CD8-positive, alpha-beta T cell (primary cell): ENCODE measurements at regions of chr13 and their contacts with region 1.

Region 1: GRCh38 chr13:50911937-50912795 is 2.6 kb downstream of the RNASEH2B start:
- DNase-seq: peak; percentile 85 to 96 (median 92)
- ATAC-seq: peak; percentile 59
- H3K4me3 ChIP-seq: peak overlapping the region; percentile 78 to 89
- H3K4me3 Mint-ChIP-seq: peak overlapping the region; percentile 92
- H3K27ac ChIP-seq: peak overlapping the region in 1 of 2 experiments; percentile 86
- H3K27ac Mint-ChIP-seq: peak overlapping the region; percentile 92
- H3K4me1 ChIP-seq: peaks cover 48% of the 10 kb centered on the region
- H3K4me1 Mint-ChIP-seq: peaks cover 59% of the 10 kb centered on the region
- H3K27me3 ChIP-seq: no peaks in the 10 kb centered on the region
- H3K27me3 Mint-ChIP-seq: no peaks in the 10 kb centered on the region
- CTCF ChIP-seq: peak; percentile 87

Region 2: GRCh38 chr13:49495783-49496762 is 1416.1 kb before region 1 on chr13 and contains the start of gene PHF11:
- CTCF ChIA-PET with region 1: no interaction called
- POLR2A ChIA-PET with region 1: no interaction called
- intact Hi-C with region 1: loop called in 1 of 2 experiments (anchors 10 kb)
- DNase-seq: peak; percentile 67 to 94 (median 87)
- ATAC-seq: peak; percentile 80
- H3K4me3 ChIP-seq: peak within 1 kb of the TSS; percentile 68 to 88
- H3K4me3 Mint-ChIP-seq: peak within 1 kb of the TSS; percentile 96
- H3K27ac ChIP-seq: peak within 1 kb of the TSS; percentile 90 to 96
- H3K27ac Mint-ChIP-seq: peak within 1 kb of the TSS; percentile 99
- H3K4me1 ChIP-seq: peaks cover 20% of the 10 kb centered on the region
- H3K4me1 Mint-ChIP-seq: peaks cover 47% of the 10 kb centered on the region
- H3K27me3 ChIP-seq: no peaks in the 10 kb centered on the region
- H3K27me3 Mint-ChIP-seq: no peaks in the 10 kb centered on the region
- CTCF ChIP-seq: no peak
- total RNA-seq, gene PHF11: 93.9 to 98.3 TPM

Region 3: DNA sequence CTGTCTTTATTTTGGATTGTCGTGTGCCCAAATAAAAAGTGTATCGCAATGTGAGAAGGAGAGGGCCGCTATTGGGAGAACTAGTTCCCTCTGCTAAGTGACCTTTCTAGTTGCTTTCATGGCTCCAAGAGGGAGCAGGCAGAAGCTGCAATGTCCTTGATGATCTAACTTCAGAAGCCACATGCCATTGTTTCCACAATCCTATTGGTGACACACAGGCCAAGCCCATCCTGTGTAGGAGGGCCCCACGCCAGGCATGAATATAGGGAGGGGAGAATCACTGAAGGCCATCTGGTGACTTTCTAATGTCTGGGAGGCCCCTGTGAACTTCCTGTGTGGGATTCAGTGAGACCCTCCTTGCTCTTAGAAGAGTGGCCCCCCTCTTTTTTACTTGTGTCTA is 1071.9 kb before region 1 on chr13:
- CTCF ChIA-PET with region 1: no interaction called
- POLR2A ChIA-PET with region 1: no interaction called
- intact Hi-C with region 1: loop called (anchors 5 kb)
- DNase-seq: no peak
- ATAC-seq: no peak
- H3K4me3 ChIP-seq: no peak overlapping the region
- H3K4me3 Mint-ChIP-seq: no peak overlapping the region
- H3K27ac ChIP-seq: no peak overlapping the region
- H3K27ac Mint-ChIP-seq: no peak overlapping the region
- H3K4me1 ChIP-seq: no peaks in the 10 kb centered on the region
- H3K4me1 Mint-ChIP-seq: no peaks in the 10 kb centered on the region
- H3K27me3 ChIP-seq: no peaks in the 10 kb centered on the region
- H3K27me3 Mint-ChIP-seq: no peaks in the 10 kb centered on the region
- CTCF ChIP-seq: no peak

Region 4: DNA sequence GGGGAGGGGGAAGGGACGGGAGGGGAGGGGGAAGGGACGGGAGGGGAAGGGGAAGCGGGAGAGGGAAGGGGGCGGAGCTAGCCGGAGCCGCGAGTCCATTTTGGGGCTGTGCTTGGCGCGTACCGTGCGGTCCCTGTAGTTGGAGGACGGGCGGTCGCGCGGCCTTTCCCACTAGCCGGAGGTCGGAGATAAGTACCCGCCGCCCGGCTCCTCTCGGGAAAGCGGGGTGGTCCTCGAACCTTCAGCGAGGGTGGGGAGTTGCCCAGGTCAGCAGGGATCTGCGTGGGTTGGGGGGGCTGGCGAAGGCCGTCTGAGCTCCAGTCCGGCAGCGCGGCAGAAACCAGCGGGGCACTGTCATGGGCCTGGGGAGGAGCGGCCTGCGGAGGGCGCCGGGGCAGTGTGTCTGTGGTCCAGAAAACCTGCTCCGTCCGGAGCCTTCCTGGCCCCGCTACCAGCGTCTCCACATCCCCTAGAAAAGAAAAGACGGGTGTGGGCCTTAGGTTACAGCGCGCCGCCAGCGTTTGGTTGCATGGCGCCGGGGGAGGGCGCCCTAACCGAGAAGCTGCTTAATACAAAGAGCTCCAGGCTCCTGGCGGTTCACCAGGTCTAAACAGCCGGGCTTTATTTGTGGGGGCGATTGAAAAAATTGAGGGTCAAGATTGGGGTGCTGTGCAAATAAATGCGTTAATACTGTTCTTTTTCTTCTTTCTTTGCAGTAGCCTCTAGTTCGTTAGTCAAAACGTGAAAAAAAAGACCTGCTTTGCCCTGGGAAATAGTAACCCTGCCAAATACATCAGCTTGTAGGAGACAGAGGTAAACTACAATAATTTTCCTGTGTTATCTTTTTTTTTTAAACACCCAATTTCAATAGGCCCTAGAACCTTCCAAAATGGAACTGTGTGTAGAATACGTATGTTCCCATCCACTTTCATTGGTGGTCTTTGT is 914.9 kb before region 1 on chr13 and contains the start of gene TRIM13:
- CTCF ChIA-PET with region 1: interaction called, 16 read pairs
- POLR2A ChIA-PET with region 1: interaction called, 22 read pairs
- intact Hi-C with region 1: loop called (anchors 1 kb)
- DNase-seq: peak; percentile 72 to 90 (median 81)
- ATAC-seq: peak; percentile 80
- H3K4me3 ChIP-seq: peak within 1 kb of the TSS; percentile 87 to 99
- H3K4me3 Mint-ChIP-seq: peak within 1 kb of the TSS; percentile 86
- H3K27ac ChIP-seq: peak within 1 kb of the TSS; percentile 84 to 85
- H3K27ac Mint-ChIP-seq: peak within 1 kb of the TSS; percentile 86
- H3K4me1 ChIP-seq: peaks cover 27% of the 10 kb centered on the region
- H3K4me1 Mint-ChIP-seq: peaks cover 49% of the 10 kb centered on the region
- H3K27me3 ChIP-seq: no peaks in the 10 kb centered on the region
- H3K27me3 Mint-ChIP-seq: no peaks in the 10 kb centered on the region
- CTCF ChIP-seq: peak; percentile 78
- total RNA-seq, gene TRIM13: 24.0 to 24.4 TPM

Region 5: DNA sequence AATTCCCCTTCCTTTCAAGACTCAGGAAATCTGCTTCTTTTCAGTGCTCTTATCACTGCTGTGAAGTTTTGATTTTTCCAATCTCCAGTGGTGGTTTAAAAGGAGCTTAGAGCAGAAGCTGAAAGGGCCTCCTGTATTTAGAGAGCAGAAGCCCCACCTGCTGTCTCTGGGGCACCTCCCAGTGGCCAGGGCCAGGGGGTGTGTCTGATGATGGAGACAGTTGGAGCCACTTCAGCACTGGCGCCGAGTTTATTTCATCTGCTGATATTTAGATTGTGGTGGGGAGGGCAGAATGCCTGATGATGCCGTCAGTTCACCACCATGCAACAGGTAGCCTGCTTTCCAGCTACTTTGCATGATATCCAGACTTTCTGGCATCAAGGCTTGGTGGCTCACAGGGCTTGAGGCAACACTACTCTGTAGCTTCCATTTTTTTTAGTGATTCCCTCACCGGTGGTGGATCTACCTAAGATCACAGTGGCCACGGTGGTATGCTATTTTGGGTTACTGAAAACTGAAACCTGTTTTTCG is 525.0 kb before region 1 on chr13:
- CTCF ChIA-PET with region 1: interaction called, 6 read pairs
- POLR2A ChIA-PET with region 1: no interaction called
- intact Hi-C with region 1: loop called in 1 of 2 experiments (anchors 10 kb)
- DNase-seq: peak in 7 of 9 experiments; percentile 12 to 52 (median 42)
- ATAC-seq: peak; percentile 78
- H3K4me3 ChIP-seq: no peak overlapping the region
- H3K4me3 Mint-ChIP-seq: no peak overlapping the region
- H3K27ac ChIP-seq: no peak overlapping the region
- H3K27ac Mint-ChIP-seq: no peak overlapping the region
- H3K4me1 ChIP-seq: no peaks in the 10 kb centered on the region
- H3K4me1 Mint-ChIP-seq: peaks cover 21% of the 10 kb centered on the region
- H3K27me3 ChIP-seq: no peaks in the 10 kb centered on the region
- H3K27me3 Mint-ChIP-seq: no peaks in the 10 kb centered on the region
- CTCF ChIP-seq: no peak

Region 6: GRCh38 chr13:50801087-50801931 is 110.9 kb before region 1 on chr13:
- CTCF ChIA-PET with region 1: interaction called, 22 read pairs
- POLR2A ChIA-PET with region 1: interaction called, 4 read pairs
- intact Hi-C with region 1: loop called (anchors 1 to 2 kb)
- DNase-seq: peak; percentile 25 to 82 (median 57)
- ATAC-seq: peak; percentile 96
- H3K4me3 ChIP-seq: no peak overlapping the region
- H3K4me3 Mint-ChIP-seq: no peak overlapping the region
- H3K27ac ChIP-seq: no peak overlapping the region
- H3K27ac Mint-ChIP-seq: no peak overlapping the region
- H3K4me1 ChIP-seq: no peaks in the 10 kb centered on the region
- H3K4me1 Mint-ChIP-seq: peaks cover 5% of the 10 kb centered on the region
- H3K27me3 ChIP-seq: no peaks in the 10 kb centered on the region
- H3K27me3 Mint-ChIP-seq: no peaks in the 10 kb centered on the region
- CTCF ChIP-seq: peak; percentile 70

Region 7: DNA sequence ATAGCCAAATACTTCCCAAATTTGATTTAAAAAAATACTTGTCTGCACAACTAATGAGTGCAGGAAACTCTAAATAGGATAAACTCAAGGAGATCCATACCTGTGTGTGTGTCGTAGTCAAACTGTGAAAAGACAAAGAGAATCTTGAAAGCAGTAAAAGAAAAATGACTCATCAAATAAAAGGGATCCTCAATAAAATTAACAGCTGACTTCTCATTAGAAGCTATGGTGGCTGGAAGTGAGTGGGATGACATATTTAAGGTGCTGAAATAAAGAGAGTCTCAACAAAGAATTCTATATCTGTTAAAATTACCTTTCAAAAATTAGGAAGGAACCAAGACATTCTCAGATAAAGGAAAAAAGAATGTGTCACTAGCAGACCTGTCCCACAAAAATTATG is 11.1 kb after region 1 on chr13:
- CTCF ChIA-PET with region 1: interaction called, 11 read pairs
- POLR2A ChIA-PET with region 1: interaction called, 3 read pairs
- intact Hi-C with region 1: no loop called
- DNase-seq: no peak
- ATAC-seq: no peak
- H3K4me3 ChIP-seq: no peak overlapping the region
- H3K4me3 Mint-ChIP-seq: no peak overlapping the region
- H3K27ac ChIP-seq: no peak overlapping the region
- H3K27ac Mint-ChIP-seq: no peak overlapping the region
- H3K4me1 ChIP-seq: peaks cover 20% of the 10 kb centered on the region
- H3K4me1 Mint-ChIP-seq: peaks cover 43% of the 10 kb centered on the region
- H3K27me3 ChIP-seq: no peaks in the 10 kb centered on the region
- H3K27me3 Mint-ChIP-seq: no peaks in the 10 kb centered on the region
- CTCF ChIP-seq: no peak

Region 8: GRCh38 chr13:51192348-51192747 is 280.2 kb after region 1 on chr13:
- CTCF ChIA-PET with region 1: no interaction called
- POLR2A ChIA-PET with region 1: no interaction called
- intact Hi-C with region 1: no loop called
- DNase-seq: no peak
- ATAC-seq: no peak
- H3K4me3 ChIP-seq: no peak overlapping the region
- H3K4me3 Mint-ChIP-seq: no peak overlapping the region
- H3K27ac ChIP-seq: no peak overlapping the region
- H3K27ac Mint-ChIP-seq: no peak overlapping the region
- H3K4me1 ChIP-seq: no peaks in the 10 kb centered on the region
- H3K4me1 Mint-ChIP-seq: no peaks in the 10 kb centered on the region
- H3K27me3 ChIP-seq: no peaks in the 10 kb centered on the region
- H3K27me3 Mint-ChIP-seq: peaks cover 18% of the 10 kb centered on the region
- CTCF ChIP-seq: no peak